ENCODE measurements at regions of chr19 and their contacts with region 1.

Region 1: DNA sequence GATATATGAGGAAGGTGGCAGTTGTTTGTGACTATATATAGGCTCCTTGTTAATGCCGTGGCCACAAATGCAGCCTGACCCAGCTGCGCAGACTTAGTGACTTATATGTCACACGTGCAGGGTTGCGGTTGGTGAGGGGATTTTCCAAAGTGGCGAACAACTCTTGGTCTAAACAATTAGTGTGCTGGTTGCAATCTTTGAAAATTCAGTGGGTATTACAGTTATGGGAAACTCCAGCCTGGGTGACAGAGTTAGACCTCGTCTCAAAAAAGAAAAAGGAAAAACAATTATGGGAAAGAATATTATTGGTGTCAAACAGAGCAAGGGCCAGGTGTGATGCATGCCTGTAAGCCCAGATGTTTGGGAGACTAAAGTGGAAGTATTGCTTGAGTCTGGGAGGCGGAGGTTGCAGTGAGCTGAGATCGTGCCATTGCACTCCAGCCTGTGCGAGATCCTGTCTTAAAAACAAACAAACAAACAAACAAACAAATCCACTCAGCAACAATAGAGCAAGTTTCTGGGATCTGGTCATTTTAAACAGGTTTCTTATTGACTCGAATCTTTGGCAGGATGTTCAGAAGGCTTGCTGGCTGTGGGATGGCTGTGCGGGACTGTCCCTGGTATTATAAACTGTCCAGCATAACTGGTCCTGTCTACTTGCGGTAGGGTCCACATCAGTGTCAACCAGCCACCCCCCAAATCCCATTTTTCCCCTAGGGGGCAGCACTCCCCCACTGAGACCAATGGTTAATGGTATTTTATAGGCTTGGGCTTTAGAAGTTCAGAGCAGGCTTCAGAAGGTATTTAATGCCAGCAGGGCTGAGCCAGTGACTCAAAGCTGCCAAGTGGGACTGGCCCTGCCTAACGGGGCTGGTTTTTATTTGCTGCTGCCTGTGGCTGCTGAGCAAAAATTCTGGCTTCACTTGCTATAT is 15.4 kb downstream of the RELB start:
- DNase-seq: peak; percentile 83
- H3K4me3 Mint-ChIP-seq: peak overlapping the region; percentile 35
- H3K27ac Mint-ChIP-seq: peak overlapping the region; percentile 84
- H3K4me1 Mint-ChIP-seq: peaks cover 14% of the 10 kb centered on the region
- H3K27me3 Mint-ChIP-seq: no peaks in the 10 kb centered on the region

Region 2: DNA sequence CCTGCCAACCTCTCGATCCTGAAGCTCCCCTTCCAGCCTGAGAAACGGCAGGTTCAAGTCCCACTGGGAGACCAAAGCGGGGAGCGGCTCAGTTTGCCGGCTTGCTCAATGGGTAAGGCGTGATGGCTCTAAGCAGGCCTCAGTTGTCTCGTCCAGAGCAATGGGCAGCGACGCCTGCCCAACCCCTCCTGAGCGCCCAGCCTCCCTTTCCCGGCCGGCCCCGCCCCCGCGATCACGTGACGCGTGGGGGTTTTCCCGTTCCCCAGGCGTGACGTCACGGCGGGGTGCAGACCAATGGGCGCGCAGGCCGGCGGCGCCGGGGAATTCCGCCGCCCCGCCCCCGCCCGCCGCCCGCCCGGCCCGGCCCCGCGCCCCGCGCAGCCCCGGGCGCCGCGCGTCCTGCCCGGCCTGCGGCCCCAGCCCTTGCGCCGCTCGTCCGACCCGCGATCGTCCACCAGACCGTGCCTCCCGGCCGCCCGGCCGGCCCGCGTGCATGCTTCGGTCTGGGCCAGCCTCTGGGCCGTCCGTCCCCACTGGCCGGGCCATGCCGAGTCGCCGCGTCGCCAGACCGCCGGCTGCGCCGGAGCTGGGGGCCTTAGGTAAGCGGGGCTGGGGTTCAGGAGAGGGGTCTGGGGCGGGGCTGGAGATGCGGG is 15.4 kb before region 1 on chr19 and contains the start of gene RELB:
- CTCF ChIA-PET with region 1: no interaction called
- POLR2A ChIA-PET with region 1: interaction called, 15 read pairs
- DNase-seq: peak; percentile 95
- H3K4me3 Mint-ChIP-seq: peak within 1 kb of the TSS; percentile 95
- H3K27ac Mint-ChIP-seq: peak within 1 kb of the TSS; percentile 99
- H3K4me1 Mint-ChIP-seq: peaks cover 26% of the 10 kb centered on the region
- H3K27me3 Mint-ChIP-seq: no peaks in the 10 kb centered on the region
- total RNA-seq, gene RELB: 32.6 to 33.5 TPM

Measured in activated CD4-positive, alpha-beta memory T cell treated with anti-CD3 and anti-CD28 coated beads, Interleukin-2, amount 10 ng/mL, durations not matched to agents 7 days and 5 days (primary cell).